ENCODE measurements at regions of chr9 and their contacts with region 1.

Region 1: GRCh38 chr9:90801583-90802289 is at the start of gene SYK:
- DNase-seq: peak; percentile 87
- ATAC-seq: peak; percentile 83
- H3K4me3 ChIP-seq: peak within 1 kb of the TSS; percentile 87 to 98 (median 93)
- H3K4me3 Mint-ChIP-seq: peak within 1 kb of the TSS; percentile 97
- H3K27ac ChIP-seq: peak within 1 kb of the TSS; percentile 87 to 93
- H3K27ac Mint-ChIP-seq: peak within 1 kb of the TSS; percentile 92
- H3K4me1 ChIP-seq: peaks cover 47 to 51% of the 10 kb centered on the region in 2 donors
- H3K4me1 Mint-ChIP-seq: peaks cover 68% of the 10 kb centered on the region
- H3K27me3 ChIP-seq: no peaks in the 10 kb centered on the region
- H3K27me3 Mint-ChIP-seq: no peaks in the 10 kb centered on the region
- CTCF ChIP-seq: no peak
- total RNA-seq, gene SYK: 242 and 251 TPM in 2 replicates

Region 2: GRCh38 chr9:90815183-90815943 is 13.6 kb after region 1 on chr9:
- CTCF ChIA-PET with region 1: interaction called, 16 read pairs
- POLR2A ChIA-PET with region 1: interaction called, 13 read pairs
- intact Hi-C with region 1: loop called (anchors 1 kb)
- DNase-seq: peak; percentile 73
- ATAC-seq: peak; percentile 75
- H3K4me3 ChIP-seq: peak overlapping the region in 3 of 5 experiments; percentile 15 to 39 (median 16)
- H3K4me3 Mint-ChIP-seq: peak overlapping the region; percentile 81
- H3K27ac ChIP-seq: peak overlapping the region; percentile 70 to 86
- H3K27ac Mint-ChIP-seq: peak overlapping the region; percentile 98
- H3K4me1 ChIP-seq: peaks cover 65 to 67% of the 10 kb centered on the region in 2 donors
- H3K4me1 Mint-ChIP-seq: peaks cover 90% of the 10 kb centered on the region
- H3K27me3 ChIP-seq: no peaks in the 10 kb centered on the region
- H3K27me3 Mint-ChIP-seq: no peaks in the 10 kb centered on the region
- CTCF ChIP-seq: no peak

Region 3: DNA sequence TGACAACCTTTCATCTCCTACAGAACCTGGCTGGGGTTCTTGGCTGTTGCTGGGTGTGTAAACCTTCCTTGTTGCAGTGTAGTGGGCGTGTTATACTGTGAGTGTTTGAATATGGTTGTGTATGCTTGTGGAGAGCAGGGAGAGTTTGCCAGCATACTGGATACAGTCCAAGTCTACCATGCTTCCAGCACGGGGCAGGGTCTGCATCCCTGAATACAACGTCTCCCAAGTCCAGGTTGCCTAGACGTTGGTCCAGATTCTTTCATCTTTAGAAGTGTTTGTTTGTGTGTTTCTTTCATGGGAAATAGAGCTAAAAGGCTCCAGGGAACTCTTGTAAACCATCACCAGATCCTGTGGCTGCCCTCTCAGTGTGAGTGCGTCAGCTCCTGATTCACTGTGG is 46.2 kb after region 1 on chr9:
- CTCF ChIA-PET with region 1: no interaction called
- POLR2A ChIA-PET with region 1: no interaction called
- intact Hi-C with region 1: no loop called
- DNase-seq: no peak
- ATAC-seq: no peak
- H3K4me3 ChIP-seq: no peak overlapping the region
- H3K4me3 Mint-ChIP-seq: no peak overlapping the region
- H3K27ac ChIP-seq: no peak overlapping the region
- H3K27ac Mint-ChIP-seq: peak overlapping the region; percentile 60
- H3K4me1 ChIP-seq: peaks cover under 1 to 4% of the 10 kb centered on the region in 2 donors
- H3K4me1 Mint-ChIP-seq: peaks cover under 1% of the 10 kb centered on the region
- H3K27me3 ChIP-seq: no peaks in the 10 kb centered on the region
- H3K27me3 Mint-ChIP-seq: no peaks in the 10 kb centered on the region
- CTCF ChIP-seq: no peak

Measured in B cell (primary cell).